Transverse colon (tissue), 4 donors: ENCODE measurements at regions of chr5 and their contacts with region 1.

Region 1: DNA sequence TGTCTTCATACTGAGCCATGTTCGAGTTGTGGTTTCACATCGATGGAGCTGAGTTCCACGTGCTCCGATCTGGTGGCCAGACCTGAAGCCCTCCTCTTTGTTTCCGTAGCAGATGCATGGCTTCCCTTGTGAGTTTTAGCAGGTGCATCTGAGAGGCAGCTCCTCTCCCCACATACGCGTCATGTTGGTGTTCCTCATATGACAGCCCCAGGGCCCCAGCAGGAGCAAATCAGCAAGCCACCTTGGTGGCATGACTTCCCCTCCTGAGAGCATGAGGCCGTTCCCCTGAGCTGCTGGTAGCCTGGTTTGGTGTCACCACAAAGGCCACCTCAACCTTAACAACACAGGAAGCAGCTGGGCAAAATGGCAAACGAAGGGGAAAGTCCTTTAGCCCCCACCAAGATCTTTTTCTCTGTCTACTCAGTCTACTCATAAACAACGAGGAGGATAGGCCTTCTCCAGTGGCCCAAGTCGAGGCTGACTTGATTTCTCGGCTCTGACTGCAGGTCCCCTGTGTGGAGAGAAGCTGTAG is 5.9 kb downstream of the CYFIP2 start:
- DNase-seq: peak; percentile 71
- H3K4me3 ChIP-seq: no peak overlapping the region
- H3K27ac ChIP-seq: peak overlapping the region; percentile 36 to 67 (median 60)
- H3K4me1 ChIP-seq: peaks cover 0 to 9% (median under 1%) of the 10 kb centered on the region in 4 donors
- H3K27me3 ChIP-seq: no peaks in the 10 kb centered on the region
- CTCF ChIP-seq: no peak
- EP300 ChIP-seq: no peak
- POLR2A ChIP-seq: no peak

Region 2: DNA sequence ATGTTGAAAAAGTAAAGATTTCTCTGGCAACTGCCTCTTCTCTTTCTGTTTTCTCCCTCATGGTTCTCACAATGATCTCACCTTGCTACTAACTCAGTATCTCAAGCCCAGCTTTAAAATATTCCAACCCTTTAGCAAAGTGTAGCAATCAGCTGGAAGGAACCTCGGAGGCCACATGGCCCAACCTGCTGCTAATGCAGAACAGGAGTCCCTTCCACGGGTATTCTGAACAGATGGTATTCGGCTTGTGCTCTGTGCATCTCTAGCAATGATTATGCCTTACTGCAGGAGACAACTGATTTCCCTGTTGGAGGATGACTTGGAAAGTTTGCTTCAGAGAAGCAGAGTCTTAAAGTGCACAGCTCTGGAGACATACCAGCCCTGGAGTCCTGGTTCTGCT is 573.5 kb before region 1 on chr5:
- in situ Hi-C with region 1: no loop called
- intact Hi-C with region 1: no loop called
- DNase-seq: no peak
- H3K4me3 ChIP-seq: no peak overlapping the region
- H3K27ac ChIP-seq: no peak overlapping the region
- H3K4me1 ChIP-seq: no peaks in the 10 kb centered on the region
- H3K27me3 ChIP-seq: no peaks in the 10 kb centered on the region
- CTCF ChIP-seq: no peak
- EP300 ChIP-seq: no peak
- POLR2A ChIP-seq: no peak

Region 3: DNA sequence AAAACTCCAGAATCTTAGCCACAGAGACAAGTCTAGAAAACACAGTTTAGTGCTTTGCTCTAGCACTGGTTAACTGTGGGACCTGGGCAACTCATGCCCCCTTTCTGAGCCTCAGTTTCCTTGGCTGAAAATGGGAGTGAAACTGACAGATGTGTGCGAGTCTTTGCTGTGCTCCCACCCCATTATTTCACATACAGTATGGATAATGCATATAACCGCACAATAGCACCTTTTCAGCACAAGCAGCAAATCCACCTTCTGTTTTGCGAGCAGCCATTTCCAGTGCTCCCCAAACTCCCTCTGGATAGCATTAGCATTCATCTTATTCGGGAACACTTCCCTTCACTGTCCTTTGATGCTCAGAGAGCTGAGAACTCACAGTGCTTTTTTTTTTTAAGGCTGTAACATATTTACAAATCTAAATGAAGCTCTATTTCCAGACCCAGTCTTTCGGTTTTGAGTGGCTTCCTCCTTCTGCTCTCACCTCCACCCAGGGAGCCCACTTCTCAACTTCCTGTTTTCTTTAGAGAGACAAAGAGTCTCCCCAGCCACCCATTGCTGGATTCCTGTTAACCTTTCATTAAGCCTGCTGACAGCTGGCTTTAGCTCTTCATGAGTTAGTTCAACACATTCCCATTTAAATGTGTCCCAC is 358.0 kb before region 1 on chr5:
- in situ Hi-C with region 1: no loop called
- intact Hi-C with region 1: no loop called
- DNase-seq: peak; percentile 38
- H3K4me3 ChIP-seq: no peak overlapping the region
- H3K27ac ChIP-seq: peak overlapping the region in 3 of 4 donors; percentile 21 to 69 (median 25)
- H3K4me1 ChIP-seq: peaks cover 0 to 8% (median 0%) of the 10 kb centered on the region in 4 donors
- H3K27me3 ChIP-seq: no peaks in the 10 kb centered on the region
- CTCF ChIP-seq: no peak
- EP300 ChIP-seq: no peak
- POLR2A ChIP-seq: no peak

Region 4: DNA sequence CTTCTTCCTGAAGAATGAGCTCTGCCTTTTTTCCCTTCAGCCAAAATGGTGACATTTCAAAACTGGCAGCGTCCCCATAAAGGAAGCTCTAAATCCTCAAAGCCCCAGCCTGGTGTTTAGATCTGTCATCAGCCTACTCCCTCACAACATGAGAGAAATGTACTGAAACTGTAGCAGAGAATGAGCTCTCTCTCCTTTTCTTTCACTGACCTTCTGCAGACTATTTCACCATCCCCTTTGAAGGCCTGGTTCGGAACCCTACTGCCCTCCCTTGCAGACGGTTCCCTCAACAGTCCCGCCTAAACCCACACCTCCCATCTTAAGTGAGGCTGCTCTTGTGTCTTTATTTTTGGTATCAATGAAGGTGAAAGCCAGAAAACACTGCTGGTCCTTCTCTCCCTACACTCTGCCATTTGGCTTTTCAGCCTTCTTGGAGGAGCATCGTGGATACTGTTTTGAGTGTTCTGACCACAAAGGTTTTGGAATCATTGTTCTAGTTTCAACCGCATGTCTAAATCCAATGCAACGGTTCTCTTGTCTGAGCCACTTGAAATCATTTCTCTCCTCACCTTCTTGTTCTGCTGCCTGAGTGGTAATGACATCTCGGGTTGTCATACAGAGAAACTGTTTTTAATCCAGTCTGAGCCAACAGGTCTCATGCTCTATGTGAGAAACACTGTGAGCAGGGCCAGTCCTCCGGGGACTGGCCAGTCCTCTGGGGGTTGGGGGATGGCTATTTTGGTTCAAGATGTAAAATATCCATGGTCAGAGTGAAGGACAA is 52.1 kb before region 1 on chr5:
- in situ Hi-C with region 1: no loop called
- intact Hi-C with region 1: no loop called
- DNase-seq: no peak
- H3K4me3 ChIP-seq: no peak overlapping the region
- H3K27ac ChIP-seq: no peak overlapping the region
- H3K4me1 ChIP-seq: no peaks in the 10 kb centered on the region
- H3K27me3 ChIP-seq: no peaks in the 10 kb centered on the region
- CTCF ChIP-seq: no peak
- EP300 ChIP-seq: no peak
- POLR2A ChIP-seq: no peak

Region 5: GRCh38 chr5:157308836-157309465 is 37.1 kb after region 1 on chr5:
- in situ Hi-C with region 1: no loop called
- intact Hi-C with region 1: no loop called
- DNase-seq: no peak
- H3K4me3 ChIP-seq: no peak overlapping the region
- H3K27ac ChIP-seq: no peak overlapping the region
- H3K4me1 ChIP-seq: no peaks in the 10 kb centered on the region
- H3K27me3 ChIP-seq: no peaks in the 10 kb centered on the region
- CTCF ChIP-seq: peak in 2 of 5 experiments; percentile 11 to 20
- EP300 ChIP-seq: no peak
- POLR2A ChIP-seq: no peak

Region 6: DNA sequence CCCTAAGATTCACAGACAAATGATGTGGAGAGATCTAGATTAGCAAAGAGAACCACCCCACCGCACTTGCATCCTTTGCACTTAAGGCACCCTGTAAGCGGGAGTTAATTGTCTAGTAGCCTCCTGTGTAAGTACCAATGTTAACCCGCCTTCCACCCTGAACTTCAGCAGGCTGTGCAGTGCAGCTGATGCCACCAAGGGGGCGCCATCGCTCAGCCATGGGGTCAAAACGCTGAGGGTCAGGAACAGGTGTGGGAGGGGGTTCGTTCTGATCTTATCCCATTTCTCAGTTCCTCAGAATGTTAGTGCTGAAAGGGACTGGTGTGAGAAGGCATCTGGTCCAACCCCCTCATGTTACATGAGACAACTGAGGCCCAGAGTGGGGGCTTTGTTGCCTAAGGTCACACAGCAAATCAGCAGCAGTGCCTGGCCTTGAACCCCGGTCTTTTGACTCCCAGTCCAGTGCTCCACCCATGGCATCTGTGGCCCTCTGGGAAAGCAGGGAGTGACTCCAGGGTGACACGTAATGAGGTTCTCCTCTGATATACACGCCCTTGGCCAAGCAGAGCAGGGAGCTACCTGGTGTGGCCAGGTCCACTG is 51.4 kb after region 1 on chr5:
- in situ Hi-C with region 1: no loop called
- intact Hi-C with region 1: loop called (anchors 1 kb)
- DNase-seq: no peak
- H3K4me3 ChIP-seq: no peak overlapping the region
- H3K27ac ChIP-seq: no peak overlapping the region
- H3K4me1 ChIP-seq: peaks cover 0 to 3% (median 0%) of the 10 kb centered on the region in 4 donors
- H3K27me3 ChIP-seq: no peaks in the 10 kb centered on the region
- CTCF ChIP-seq: no peak
- EP300 ChIP-seq: no peak
- POLR2A ChIP-seq: no peak